Calu3 (cell line): ENCODE measurements at regions of chr5 and their contacts with region 1.

Region 1: GRCh38 chr5:153974131-153974812 is 64.4 kb downstream of the FAM114A2 start:
- DNase-seq: peak; percentile 43
- H3K4me3 Mint-ChIP-seq: no peak overlapping the region
- H3K27ac Mint-ChIP-seq: no peak overlapping the region
- H3K4me1 Mint-ChIP-seq: no peaks in the 10 kb centered on the region
- H3K27me3 Mint-ChIP-seq: peaks cover 83% of the 10 kb centered on the region
- CTCF ChIP-seq: peak; percentile 67

Region 2: GRCh38 chr5:153542536-153542935 is 431.7 kb before region 1 on chr5:
- CTCF ChIA-PET with region 1: interaction called, 11 read pairs
- intact Hi-C with region 1: no loop called
- DNase-seq: no peak
- H3K4me3 Mint-ChIP-seq: no peak overlapping the region
- H3K27ac Mint-ChIP-seq: no peak overlapping the region
- H3K4me1 Mint-ChIP-seq: no peaks in the 10 kb centered on the region
- H3K27me3 Mint-ChIP-seq: peaks cover 14% of the 10 kb centered on the region
- CTCF ChIP-seq: no peak

Region 3: DNA sequence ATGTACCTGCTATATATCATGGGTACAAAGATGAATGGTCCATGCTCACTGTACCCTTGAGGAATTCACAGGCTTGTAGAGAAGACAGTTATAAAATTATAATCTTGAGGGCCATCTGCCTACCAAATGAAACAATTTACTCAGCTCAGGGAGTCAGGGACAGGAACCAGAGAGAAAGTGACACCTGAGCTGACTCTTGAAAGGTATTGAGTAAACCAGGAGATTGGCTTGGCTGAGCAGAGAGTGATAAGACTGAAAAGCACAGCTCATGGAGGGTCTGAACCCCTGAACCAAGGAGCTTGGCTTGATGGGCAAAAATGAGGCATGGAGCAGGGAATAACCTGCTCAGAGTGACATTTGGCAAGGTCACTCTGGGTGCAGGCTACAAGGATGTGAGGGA is 82.9 kb before region 1 on chr5:
- CTCF ChIA-PET with region 1: no interaction called
- intact Hi-C with region 1: no loop called
- DNase-seq: no peak
- H3K4me3 Mint-ChIP-seq: no peak overlapping the region
- H3K27ac Mint-ChIP-seq: no peak overlapping the region
- H3K4me1 Mint-ChIP-seq: no peaks in the 10 kb centered on the region
- H3K27me3 Mint-ChIP-seq: peaks cover 30% of the 10 kb centered on the region
- CTCF ChIP-seq: no peak

Region 4: GRCh38 chr5:153905219-153905618 is 69.1 kb before region 1 on chr5:
- CTCF ChIA-PET with region 1: no interaction called
- intact Hi-C with region 1: no loop called
- DNase-seq: no peak
- H3K4me3 Mint-ChIP-seq: no peak overlapping the region
- H3K27ac Mint-ChIP-seq: no peak overlapping the region
- H3K4me1 Mint-ChIP-seq: no peaks in the 10 kb centered on the region
- H3K27me3 Mint-ChIP-seq: peaks cover 31% of the 10 kb centered on the region
- CTCF ChIP-seq: no peak

Region 5: DNA sequence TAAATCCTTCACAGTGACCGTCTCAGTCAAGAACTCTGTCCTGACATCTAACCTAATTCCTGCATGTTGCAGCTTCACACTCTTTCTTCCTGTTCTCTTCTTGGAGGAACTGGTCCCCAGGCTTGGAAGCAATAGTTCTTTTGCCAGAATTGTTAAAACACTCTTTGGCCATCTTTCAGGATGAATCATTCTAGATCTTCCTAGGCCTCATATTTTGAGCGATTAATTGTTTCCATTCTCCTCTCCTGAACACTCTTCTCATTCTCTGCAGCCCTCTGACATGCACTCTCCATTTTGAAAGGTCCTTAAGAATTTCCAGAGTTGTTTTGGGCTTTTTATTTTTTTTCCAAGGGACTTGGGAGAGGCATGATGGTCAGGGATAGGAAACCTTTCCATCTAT is 21.4 kb before region 1 on chr5:
- CTCF ChIA-PET with region 1: no interaction called
- intact Hi-C with region 1: no loop called
- DNase-seq: no peak
- H3K4me3 Mint-ChIP-seq: no peak overlapping the region
- H3K27ac Mint-ChIP-seq: no peak overlapping the region
- H3K4me1 Mint-ChIP-seq: no peaks in the 10 kb centered on the region
- H3K27me3 Mint-ChIP-seq: peaks cover 31% of the 10 kb centered on the region
- CTCF ChIP-seq: no peak

Region 6: GRCh38 chr5:154179846-154180710 is 205.8 kb after region 1 on chr5:
- CTCF ChIA-PET with region 1: interaction called, 5 read pairs
- intact Hi-C with region 1: loop called (anchors 1 kb)
- DNase-seq: peak; percentile 38
- H3K4me3 Mint-ChIP-seq: no peak overlapping the region
- H3K27ac Mint-ChIP-seq: no peak overlapping the region
- H3K4me1 Mint-ChIP-seq: no peaks in the 10 kb centered on the region
- H3K27me3 Mint-ChIP-seq: peaks cover 61% of the 10 kb centered on the region
- CTCF ChIP-seq: peak; percentile 73

Region 7: DNA sequence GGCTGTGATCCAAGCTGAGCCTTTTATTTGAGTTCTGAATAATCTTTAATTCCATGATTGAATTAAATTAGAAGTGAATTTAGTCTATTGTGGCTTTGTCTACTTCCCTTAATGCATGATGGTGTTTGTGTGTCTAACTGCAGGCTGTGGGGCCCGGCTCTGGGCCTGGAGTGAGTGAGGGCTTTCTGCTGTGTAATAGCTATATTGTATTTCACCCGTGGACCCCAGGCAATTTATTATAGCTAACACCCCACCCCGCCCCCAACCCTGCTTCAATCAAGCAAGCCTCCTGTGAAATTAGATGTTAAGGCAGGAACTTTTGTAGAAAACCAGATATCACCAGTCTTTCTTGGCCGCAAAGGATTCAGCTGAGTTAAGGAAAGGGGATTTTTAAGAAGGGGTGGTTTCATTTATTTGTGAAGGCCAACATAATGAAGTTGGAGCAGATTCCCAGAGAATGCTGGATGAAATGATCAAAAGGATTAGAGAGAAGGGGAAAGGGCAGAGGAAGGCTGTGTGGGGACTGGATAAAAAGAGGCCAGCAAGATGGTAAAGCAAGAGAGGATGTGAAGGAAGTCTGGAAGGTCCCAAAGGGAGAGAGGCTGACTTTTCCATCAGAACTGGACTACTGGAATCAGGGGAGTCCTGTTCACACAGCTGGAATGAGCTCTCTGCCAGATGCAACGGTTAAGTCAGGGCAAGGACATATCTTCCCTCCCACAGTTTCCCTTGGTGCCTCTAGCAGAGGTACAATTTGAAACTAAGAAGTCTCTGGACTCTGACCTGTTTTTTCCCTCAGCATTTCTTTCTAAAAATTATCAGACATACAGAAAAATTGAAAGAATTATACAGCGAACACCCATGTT is 346.2 kb after region 1 on chr5:
- CTCF ChIA-PET with region 1: no interaction called
- intact Hi-C with region 1: no loop called
- DNase-seq: no peak
- H3K4me3 Mint-ChIP-seq: no peak overlapping the region
- H3K27ac Mint-ChIP-seq: no peak overlapping the region
- H3K4me1 Mint-ChIP-seq: no peaks in the 10 kb centered on the region
- H3K27me3 Mint-ChIP-seq: no peaks in the 10 kb centered on the region
- CTCF ChIP-seq: no peak

Region 8: DNA sequence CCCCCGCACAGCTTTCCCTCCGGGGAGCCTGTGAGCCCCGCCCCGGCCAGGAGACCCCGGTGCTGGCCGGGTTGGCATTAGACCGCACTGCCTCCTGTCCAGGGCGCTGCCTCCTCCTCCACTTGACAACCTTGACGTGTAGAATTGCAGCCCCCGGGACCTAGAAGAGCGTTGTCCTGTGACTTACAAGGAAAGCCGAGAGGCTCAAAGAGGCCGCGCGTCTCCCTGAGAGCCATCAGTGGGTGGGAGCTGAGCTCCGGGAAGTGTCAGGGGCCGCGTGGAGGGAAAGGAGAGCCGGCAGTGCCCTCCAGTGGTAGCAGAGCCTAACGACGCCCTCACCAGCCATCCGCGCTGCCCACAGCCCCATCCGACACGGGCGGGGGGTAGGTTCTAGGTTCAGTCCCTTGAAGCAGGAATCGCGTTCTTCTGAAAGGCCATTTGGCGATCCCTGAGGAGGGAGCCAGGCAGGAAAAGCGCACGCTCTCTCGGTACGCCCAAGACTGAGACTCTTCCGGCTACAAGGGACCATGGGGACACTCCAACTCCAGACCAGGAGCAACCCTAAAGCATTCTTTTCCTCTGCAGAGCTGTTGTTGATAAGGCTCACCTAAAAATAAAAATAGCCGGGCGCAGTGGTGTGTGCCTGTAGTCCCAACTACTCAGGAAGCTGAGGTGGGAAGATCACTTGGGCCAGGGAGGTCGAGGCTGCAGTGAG is 431.0 kb after region 1 on chr5:
- CTCF ChIA-PET with region 1: no interaction called
- intact Hi-C with region 1: loop called (anchors 5 kb)
- DNase-seq: peak; percentile 89
- H3K4me3 Mint-ChIP-seq: peak overlapping the region; percentile 54
- H3K27ac Mint-ChIP-seq: no peak overlapping the region
- H3K4me1 Mint-ChIP-seq: no peaks in the 10 kb centered on the region
- H3K27me3 Mint-ChIP-seq: no peaks in the 10 kb centered on the region
- CTCF ChIP-seq: peak; percentile 88

Region 9: DNA sequence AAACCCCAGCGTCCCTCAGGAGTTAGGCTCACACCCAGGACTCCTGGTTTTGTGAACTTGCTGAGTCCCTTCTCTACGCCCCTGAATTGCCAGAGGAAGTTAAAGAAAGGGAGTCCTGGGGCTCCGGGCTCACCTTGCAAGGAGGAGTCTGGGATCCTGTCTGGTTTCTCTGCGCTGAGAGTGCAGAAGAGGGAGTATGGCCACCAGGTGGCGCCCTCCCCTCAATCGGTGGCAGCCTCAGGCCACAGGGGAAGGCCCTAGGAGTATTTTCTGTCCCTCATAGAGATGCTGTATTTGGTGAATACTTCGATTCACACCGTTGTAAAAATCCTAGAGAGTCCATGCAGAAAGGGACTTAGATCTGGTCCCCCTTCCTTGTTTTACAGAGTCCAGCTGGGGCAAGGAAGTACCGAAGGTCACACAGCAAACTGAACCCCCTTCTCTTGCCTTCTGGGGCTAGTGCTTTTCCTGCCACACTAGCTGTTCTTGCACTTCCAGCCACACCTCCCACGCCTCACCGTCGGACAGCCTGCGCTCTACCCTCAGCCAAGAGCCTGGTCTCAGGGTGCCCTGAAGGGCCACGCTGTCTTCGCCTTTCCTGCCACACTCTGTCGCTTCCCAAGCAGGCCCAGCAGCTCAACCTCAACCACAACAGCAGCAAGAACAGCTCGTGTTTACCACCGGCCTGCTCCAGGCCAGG is 493.5 kb after region 1 on chr5:
- CTCF ChIA-PET with region 1: no interaction called
- intact Hi-C with region 1: loop called (anchors 10 kb)
- DNase-seq: peak; percentile 91
- H3K4me3 Mint-ChIP-seq: no peak overlapping the region
- H3K27ac Mint-ChIP-seq: no peak overlapping the region
- H3K4me1 Mint-ChIP-seq: no peaks in the 10 kb centered on the region
- H3K27me3 Mint-ChIP-seq: peaks cover 52% of the 10 kb centered on the region
- CTCF ChIP-seq: peak; percentile 96